Caco-2 (cell line): ENCODE measurements at regions of chr12 and their contacts with region 1.

Region 1: DNA sequence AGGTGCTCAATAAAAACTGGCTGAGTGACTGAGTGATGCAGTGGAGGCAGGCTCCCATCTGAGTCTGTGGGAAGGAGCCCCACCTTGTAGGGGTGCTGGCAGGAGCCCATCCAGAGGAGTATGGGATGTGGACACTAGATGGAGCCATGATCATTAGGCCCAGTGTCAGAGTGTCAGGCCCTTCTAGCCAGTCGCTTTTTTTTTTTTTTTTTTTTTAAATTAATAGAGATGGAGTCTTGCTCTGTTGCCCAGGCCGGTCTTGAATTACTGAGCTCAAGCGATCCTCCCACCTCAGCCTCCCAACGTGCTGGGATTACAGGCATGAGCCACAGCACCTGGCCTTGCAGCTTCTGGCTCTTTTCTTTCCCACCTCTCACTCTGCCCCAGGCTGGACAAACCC is 11.5 kb downstream of the RITA1 start:
- DNase-seq: peak; percentile 81 to 83
- H3K4me3 ChIP-seq: no peak overlapping the region
- H3K4me3 Mint-ChIP-seq: no peak overlapping the region
- H3K27ac Mint-ChIP-seq: no peak overlapping the region
- H3K4me1 ChIP-seq: peaks cover 4% of the 10 kb centered on the region; the same call in 1 of the 2 replicates
- H3K4me1 Mint-ChIP-seq: peaks cover 7% of the 10 kb centered on the region
- H3K27me3 ChIP-seq: no peaks in the 10 kb centered on the region
- H3K27me3 Mint-ChIP-seq: no peaks in the 10 kb centered on the region
- CTCF ChIP-seq: peak; percentile 66 to 86

Region 2: GRCh38 chr12:113173081-113173698 is 23.8 kb before region 1 on chr12:
- CTCF ChIA-PET with region 1: no interaction called
- POLR2A ChIA-PET with region 1: no interaction called
- intact Hi-C with region 1: no loop called
- DNase-seq: no peak
- H3K4me3 ChIP-seq: no peak overlapping the region
- H3K4me3 Mint-ChIP-seq: no peak overlapping the region
- H3K27ac Mint-ChIP-seq: no peak overlapping the region
- H3K4me1 ChIP-seq: no peaks in the 10 kb centered on the region
- H3K4me1 Mint-ChIP-seq: no peaks in the 10 kb centered on the region
- H3K27me3 ChIP-seq: no peaks in the 10 kb centered on the region
- H3K27me3 Mint-ChIP-seq: no peaks in the 10 kb centered on the region
- CTCF ChIP-seq: no peak

Region 3: GRCh38 chr12:113221181-113221997 is 24.4 kb after region 1 on chr12 and contains the start of gene TPCN1:
- CTCF ChIA-PET with region 1: no interaction called
- POLR2A ChIA-PET with region 1: interaction called, 7 read pairs
- intact Hi-C with region 1: loop called (anchors 2 kb)
- DNase-seq: peak; percentile 99
- H3K4me3 ChIP-seq: peak within 1 kb of the TSS; percentile 73
- H3K4me3 Mint-ChIP-seq: peak within 1 kb of the TSS; percentile 79
- H3K27ac Mint-ChIP-seq: peak within 1 kb of the TSS; percentile 83
- H3K4me1 ChIP-seq: peaks cover 16% of the 10 kb centered on the region; the same call in 1 of the 2 replicates
- H3K4me1 Mint-ChIP-seq: no peaks in the 10 kb centered on the region
- H3K27me3 ChIP-seq: no peaks in the 10 kb centered on the region
- H3K27me3 Mint-ChIP-seq: no peaks in the 10 kb centered on the region
- CTCF ChIP-seq: no peak
- total RNA-seq, gene TPCN1: 54.4 and 55.9 TPM in 2 replicates

Region 4: DNA sequence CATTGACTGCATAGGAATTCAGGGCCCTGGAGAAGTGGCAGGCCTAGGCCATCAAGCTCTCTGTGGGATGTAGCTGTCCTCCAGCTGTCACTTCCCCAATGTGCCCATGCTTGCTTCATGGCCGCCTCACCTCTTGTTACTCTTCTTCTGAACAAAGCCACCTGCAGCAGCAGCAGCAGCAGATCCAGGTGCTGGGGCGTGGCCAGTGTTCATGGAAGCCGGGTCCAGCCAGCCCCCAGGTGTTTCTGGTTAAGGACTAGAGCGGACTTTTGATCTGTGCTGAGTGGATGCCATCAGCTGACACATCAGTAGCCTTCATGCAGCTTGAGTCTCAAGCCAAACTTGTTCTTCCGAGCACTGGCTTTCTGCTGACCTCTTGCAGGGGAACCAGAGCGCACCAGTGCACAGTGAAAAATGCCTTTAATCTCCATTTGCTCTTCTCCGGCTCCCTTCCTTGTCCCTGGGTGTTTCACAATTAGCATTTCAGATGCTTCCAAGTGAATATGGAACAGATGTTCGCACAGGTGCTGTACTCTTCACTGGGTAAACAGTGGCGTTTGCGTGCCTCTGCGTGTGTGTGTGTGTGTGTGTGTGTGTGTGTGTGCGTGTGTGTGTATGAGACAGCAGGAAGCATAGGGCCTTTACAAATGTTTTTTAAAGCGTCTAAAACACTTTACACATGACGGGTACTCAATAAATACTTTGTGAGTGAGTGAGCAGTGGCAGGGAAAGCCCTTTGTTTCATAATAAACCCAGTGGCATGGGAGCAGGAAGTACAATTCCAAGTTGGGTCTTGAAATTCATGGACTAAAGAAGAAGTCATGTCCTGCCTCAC is 44.4 kb after region 1 on chr12:
- CTCF ChIA-PET with region 1: interaction called, 4 read pairs
- POLR2A ChIA-PET with region 1: interaction called, 4 read pairs
- intact Hi-C with region 1: loop called (anchors 2 kb)
- DNase-seq: peak; percentile 82 to 87
- H3K4me3 ChIP-seq: no peak overlapping the region
- H3K4me3 Mint-ChIP-seq: peak overlapping the region; percentile 12
- H3K27ac Mint-ChIP-seq: peak overlapping the region; percentile 93
- H3K4me1 ChIP-seq: peaks cover 53% of the 10 kb centered on the region
- H3K4me1 Mint-ChIP-seq: peaks cover 48% of the 10 kb centered on the region
- H3K27me3 ChIP-seq: no peaks in the 10 kb centered on the region
- H3K27me3 Mint-ChIP-seq: no peaks in the 10 kb centered on the region
- CTCF ChIP-seq: no peak

Region 5: DNA sequence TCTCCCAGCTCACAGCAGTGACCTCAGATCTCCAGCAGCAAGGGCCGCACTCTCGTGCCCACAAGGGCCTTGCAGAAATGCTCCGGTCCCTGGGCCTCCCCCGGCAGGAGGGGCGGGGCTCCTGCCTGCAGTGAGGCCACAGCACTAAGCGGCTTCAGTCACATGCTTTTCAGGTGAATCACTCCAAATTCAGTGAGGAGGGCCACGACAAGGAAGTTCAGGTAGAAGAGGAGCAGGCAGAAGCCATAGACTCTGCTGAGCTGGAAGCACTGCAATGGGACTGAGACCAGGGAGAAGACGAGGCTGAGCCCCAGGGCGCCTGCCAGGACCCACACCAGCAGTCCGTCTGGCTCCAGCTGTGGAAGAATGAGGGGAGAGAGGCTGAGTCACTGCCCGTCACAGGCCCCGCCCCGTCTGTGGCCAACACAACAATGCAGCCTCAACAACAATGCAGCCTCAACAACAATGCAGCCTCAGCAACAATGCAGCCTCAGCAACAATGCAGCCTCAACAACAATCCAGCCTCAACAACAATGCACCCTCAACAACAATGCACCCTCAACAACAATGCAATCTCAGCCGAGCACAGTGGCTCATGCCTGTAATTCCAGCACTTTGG is 102.7 kb after region 1 on chr12:
- CTCF ChIA-PET with region 1: no interaction called
- POLR2A ChIA-PET with region 1: no interaction called
- intact Hi-C with region 1: loop called (anchors 1 kb)
- DNase-seq: peak; percentile 84 to 89
- H3K4me3 ChIP-seq: no peak overlapping the region
- H3K4me3 Mint-ChIP-seq: peak overlapping the region; percentile 37
- H3K27ac Mint-ChIP-seq: peak overlapping the region; percentile 97
- H3K4me1 ChIP-seq: peaks cover 21% of the 10 kb centered on the region
- H3K4me1 Mint-ChIP-seq: peaks cover 8% of the 10 kb centered on the region
- H3K27me3 ChIP-seq: no peaks in the 10 kb centered on the region
- H3K27me3 Mint-ChIP-seq: no peaks in the 10 kb centered on the region
- CTCF ChIP-seq: no peak

Region 6: DNA sequence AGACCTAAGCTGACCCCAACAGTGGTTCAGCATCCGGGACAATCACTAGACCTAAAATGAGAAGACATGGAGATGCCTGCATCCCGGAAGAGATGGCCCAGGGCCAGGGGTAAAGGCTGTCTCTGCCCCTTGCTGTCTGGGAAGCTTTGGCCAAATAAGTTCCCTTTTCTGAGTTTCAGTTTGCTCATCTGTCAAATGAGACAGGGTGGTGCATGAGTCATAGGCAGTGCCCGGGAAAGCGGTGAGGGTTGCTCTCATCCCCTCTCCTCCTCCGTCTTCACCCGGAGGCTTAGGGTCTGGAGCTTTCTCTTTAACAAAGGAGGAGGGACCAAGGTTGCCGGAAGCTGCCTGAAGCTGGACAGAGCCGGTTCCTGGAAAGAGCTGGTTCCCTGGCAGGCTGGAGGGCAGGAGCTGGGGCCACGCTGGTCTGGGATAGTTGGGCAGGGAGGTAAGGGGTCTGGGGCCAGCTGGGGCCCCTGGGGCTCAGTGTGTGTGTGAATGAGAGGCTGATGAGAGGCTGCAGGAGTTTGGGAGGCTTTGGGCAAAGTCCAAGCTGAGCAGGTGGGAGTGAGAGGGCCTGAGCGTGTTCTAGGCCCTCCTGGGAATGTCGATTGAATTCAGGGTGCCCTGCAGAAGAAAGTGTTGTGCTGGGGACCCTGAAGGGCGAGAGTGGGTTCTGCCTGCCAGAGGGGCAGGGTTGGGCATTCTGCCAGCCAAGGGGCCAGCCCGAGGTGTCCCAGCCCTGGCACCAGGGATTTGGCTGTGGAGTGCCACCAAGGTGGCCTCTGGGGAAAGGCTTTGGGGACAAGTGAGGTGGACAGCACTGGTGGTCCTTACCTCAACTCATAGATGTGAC is 225.3 kb after region 1 on chr12 and contains the start of gene SDSL:
- CTCF ChIA-PET with region 1: interaction called, 4 read pairs
- POLR2A ChIA-PET with region 1: no interaction called
- intact Hi-C with region 1: loop called (anchors 5 kb)
- DNase-seq: peak; percentile 49 to 66
- H3K4me3 ChIP-seq: peak within 1 kb of the TSS; percentile 33
- H3K4me3 Mint-ChIP-seq: peak within 1 kb of the TSS; percentile 84
- H3K27ac Mint-ChIP-seq: peak within 1 kb of the TSS; percentile 75
- H3K4me1 ChIP-seq: peaks cover 27% of the 10 kb centered on the region
- H3K4me1 Mint-ChIP-seq: peaks cover 7% of the 10 kb centered on the region
- H3K27me3 ChIP-seq: no peaks in the 10 kb centered on the region
- H3K27me3 Mint-ChIP-seq: no peaks in the 10 kb centered on the region
- CTCF ChIP-seq: no peak
- total RNA-seq, gene SDSL: 4.0 and 4.5 TPM in 2 replicates